Caco-2 (cell line): ENCODE measurements at regions of chr4 and their contacts with region 1.

Region 1: DNA sequence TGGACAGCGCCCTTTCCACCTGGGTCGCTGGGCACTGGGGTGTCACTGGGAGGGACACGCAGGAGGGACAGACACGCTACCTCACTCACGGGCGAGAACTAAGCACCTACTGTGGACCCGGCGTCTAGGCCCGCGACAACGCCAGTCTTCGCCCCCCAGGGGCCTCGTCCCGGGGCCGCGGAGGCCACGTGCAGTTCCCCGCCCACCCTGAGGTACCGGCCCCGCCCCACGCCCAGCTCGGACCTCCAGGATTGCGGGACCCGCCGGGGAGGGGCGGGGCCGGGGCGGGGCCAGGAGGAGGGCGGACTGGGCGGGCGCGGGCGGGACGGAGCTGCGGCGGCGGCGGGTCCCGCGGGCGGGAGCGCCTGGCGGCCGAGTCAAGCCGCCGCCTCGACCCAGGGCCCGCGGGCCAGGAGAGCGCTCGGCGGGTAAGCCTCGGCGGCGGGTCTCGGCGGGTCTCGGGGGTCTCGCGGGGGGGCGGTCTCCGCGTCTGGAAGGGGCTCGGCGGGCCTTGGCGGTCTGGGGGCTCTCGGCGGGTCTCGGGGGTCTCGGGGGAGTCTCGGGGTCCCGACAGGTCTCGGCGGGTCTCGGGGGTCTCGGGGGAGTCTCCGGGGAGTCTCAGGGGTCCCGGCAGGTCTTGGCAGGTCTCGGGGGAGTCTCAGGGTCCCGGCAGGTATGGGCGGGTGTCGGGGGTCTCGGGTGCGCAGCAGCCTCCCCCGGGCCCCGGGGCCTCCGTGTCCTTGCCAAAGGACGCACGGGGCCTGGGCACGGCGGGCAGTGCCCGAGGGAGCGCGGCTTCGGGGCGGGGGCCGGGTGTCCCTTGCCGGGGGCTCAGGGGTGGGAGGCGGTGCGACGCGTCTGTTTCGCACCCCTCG is at the start of gene SH3BP2:
- DNase-seq: peak; percentile 85
- H3K4me3 ChIP-seq: peak within 1 kb of the TSS; percentile 49
- H3K4me3 Mint-ChIP-seq: peak within 1 kb of the TSS; percentile 71
- H3K27ac Mint-ChIP-seq: peak within 1 kb of the TSS; percentile 22
- H3K4me1 ChIP-seq: peaks cover 25% of the 10 kb centered on the region
- H3K4me1 Mint-ChIP-seq: no peaks in the 10 kb centered on the region
- H3K27me3 ChIP-seq: no peaks in the 10 kb centered on the region
- H3K27me3 Mint-ChIP-seq: no peaks in the 10 kb centered on the region
- CTCF ChIP-seq: no peak
- total RNA-seq, gene SH3BP2: 44.4 and 48.5 TPM in 2 replicates

Region 2: DNA sequence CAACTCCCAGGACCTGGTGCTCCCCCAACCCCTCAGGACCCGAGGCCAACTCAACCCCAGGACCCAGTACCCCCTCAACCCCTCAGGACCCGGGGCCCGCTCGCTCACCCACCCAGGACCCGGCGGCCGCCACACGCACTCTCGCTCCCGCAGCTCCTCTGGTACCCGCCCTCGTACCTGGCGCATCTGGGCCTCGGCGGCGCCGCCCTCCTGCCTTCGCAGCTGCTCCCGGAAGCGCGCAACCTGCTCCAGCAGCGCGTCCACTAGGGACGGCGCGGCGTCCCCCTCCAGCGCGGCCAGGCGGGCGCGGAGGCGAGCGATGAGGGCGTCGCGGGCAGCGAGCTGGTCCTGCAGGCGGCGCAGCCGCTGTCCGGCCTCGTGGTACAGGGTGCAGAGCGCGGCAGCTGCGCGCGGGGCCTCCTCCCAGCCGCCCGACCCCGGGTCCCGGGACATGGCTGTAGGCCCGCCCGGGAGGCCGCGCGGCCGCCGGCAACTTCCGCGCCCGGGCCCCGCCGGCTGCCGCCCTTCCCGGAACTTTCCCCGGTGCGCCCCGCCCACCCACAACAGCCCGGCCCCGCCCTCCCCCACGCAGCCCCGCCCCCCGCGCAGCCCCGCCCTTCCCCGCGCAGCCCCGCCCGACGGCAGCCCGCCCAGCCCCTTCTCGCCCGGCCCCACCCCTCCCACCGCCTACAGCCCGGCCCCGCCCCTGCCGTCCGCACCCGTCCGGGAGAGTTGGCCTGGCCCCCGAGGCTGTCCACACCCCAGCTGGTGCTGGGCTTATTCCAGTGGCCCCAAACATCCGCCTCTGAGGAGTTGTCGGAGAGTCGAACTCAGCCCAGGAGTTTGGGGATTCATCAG is 36.9 kb before region 1 on chr4 and contains the start of gene TNIP2:
- CTCF ChIA-PET with region 1: interaction called, 4 read pairs
- POLR2A ChIA-PET with region 1: no interaction called
- intact Hi-C with region 1: loop called (anchors 1 kb)
- DNase-seq: peak; percentile 83 to 87
- H3K4me3 ChIP-seq: peak within 1 kb of the TSS; percentile 83
- H3K4me3 Mint-ChIP-seq: peak within 1 kb of the TSS; percentile 74
- H3K27ac Mint-ChIP-seq: peak within 1 kb of the TSS; percentile 49
- H3K4me1 ChIP-seq: peaks cover 21% of the 10 kb centered on the region
- H3K4me1 Mint-ChIP-seq: peaks cover 13% of the 10 kb centered on the region
- H3K27me3 ChIP-seq: no peaks in the 10 kb centered on the region
- H3K27me3 Mint-ChIP-seq: no peaks in the 10 kb centered on the region
- CTCF ChIP-seq: no peak
- total RNA-seq, gene TNIP2: 35.8 and 36.3 TPM in 2 replicates

Region 3: GRCh38 chr4:2891294-2891693 is 98.3 kb after region 1 on chr4:
- CTCF ChIA-PET with region 1: no interaction called
- POLR2A ChIA-PET with region 1: no interaction called
- intact Hi-C with region 1: no loop called
- DNase-seq: no peak
- H3K4me3 ChIP-seq: no peak overlapping the region
- H3K4me3 Mint-ChIP-seq: no peak overlapping the region
- H3K27ac Mint-ChIP-seq: peak overlapping the region; percentile 35
- H3K4me1 ChIP-seq: no peaks in the 10 kb centered on the region
- H3K4me1 Mint-ChIP-seq: peaks cover 6% of the 10 kb centered on the region
- H3K27me3 ChIP-seq: no peaks in the 10 kb centered on the region
- H3K27me3 Mint-ChIP-seq: no peaks in the 10 kb centered on the region
- CTCF ChIP-seq: no peak